Panc1 (cell line): ENCODE measurements at regions of chr11 and their contacts with region 1.

Region 1: DNA sequence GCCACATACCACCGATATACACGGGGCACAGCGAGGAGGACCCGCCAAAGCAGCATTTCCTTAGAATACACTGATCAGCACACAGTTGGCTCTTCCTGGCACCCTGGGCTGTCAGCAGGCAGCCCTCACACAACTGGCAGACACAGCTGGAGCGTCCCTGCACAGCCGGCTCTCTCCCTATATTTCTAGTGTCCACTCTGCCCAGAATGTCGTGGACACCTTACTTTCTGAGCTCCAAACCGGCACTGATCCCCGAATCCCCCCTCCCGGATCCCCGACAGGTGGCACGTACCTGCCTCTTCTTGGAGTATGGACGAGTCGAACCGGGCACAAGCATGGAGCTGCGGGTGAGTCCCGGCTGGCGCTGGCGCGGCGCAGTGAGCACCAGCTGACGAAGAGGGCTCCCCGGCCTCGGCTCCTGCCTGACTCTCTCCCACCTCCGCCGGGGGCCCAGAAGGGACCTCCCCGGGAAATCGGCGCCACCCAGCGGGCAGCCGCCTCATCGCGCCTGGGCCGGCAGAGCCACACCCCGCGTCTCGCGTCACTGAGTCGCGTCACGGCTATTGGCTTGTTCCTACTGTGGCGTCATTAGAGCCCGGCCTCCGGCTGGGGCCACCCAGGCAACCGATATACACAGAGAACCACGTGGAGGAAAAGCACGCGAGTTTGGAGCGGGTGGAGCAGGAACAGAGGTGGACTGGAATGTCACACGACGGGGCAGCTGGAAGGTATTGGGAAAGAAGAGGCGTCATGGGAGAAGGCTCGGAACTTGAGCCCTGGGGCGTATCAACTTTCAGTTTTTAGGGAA is at the start of gene USP2:
- DNase-seq: peak; percentile 78
- ATAC-seq: peak; percentile 99
- H3K4me3 ChIP-seq: peak within 1 kb of the TSS; percentile 56 to 86
- H3K27ac ChIP-seq: peak within 1 kb of the TSS; percentile 57
- H3K4me1 ChIP-seq: peaks cover 7% of the 10 kb centered on the region
- H3K27me3 ChIP-seq: no peaks in the 10 kb centered on the region
- CTCF ChIP-seq: peak; percentile 99
- total RNA-seq, gene USP2: 3.1 TPM

Region 2: GRCh38 chr11:118435893-118436624 is 945.3 kb before region 1 on chr11 and contains the start of gene KMT2A:
- CTCF ChIA-PET with region 1: no interaction called
- POLR2A ChIA-PET with region 1: no interaction called
- in situ Hi-C with region 1: no loop called
- intact Hi-C with region 1: no loop called
- DNase-seq: peak; percentile 69
- ATAC-seq: peak; percentile 76
- H3K4me3 ChIP-seq: peak within 1 kb of the TSS; percentile 84 to 95
- H3K27ac ChIP-seq: peak within 1 kb of the TSS; percentile 96
- H3K4me1 ChIP-seq: peaks cover 37% of the 10 kb centered on the region
- H3K27me3 ChIP-seq: no peaks in the 10 kb centered on the region
- CTCF ChIP-seq: no peak
- total RNA-seq, gene KMT2A: 139 TPM

Region 3: GRCh38 chr11:119339589-119340343 is 41.6 kb before region 1 on chr11:
- CTCF ChIA-PET with region 1: interaction called, 10 read pairs
- POLR2A ChIA-PET with region 1: no interaction called
- in situ Hi-C with region 1: no loop called
- intact Hi-C with region 1: no loop called
- DNase-seq: no peak
- ATAC-seq: peak; percentile 62
- H3K4me3 ChIP-seq: peak overlapping the region; percentile 36 to 48
- H3K27ac ChIP-seq: peak overlapping the region; percentile 24; the same call in 1 of the 2 replicates
- H3K4me1 ChIP-seq: peaks cover 39% of the 10 kb centered on the region
- H3K27me3 ChIP-seq: no peaks in the 10 kb centered on the region
- CTCF ChIP-seq: peak; percentile 100

Region 4: DNA sequence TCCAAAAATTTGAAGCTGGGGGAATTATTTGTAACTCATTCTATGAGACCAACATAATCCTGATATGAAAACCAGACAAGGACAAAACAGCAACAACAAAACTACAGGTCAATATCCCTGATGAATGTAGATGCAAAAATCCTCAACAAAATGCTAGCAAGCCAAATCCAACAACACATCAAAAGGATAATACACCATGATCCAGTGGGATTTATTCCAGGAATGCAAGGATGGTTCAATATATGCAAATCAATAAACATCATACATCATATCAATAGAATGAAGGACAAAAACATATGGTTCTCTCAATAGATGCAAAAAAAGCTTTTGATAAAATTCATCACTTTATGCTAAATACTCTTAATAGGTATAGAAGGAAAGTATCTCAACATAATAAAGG is 19.5 kb after region 1 on chr11:
- CTCF ChIA-PET with region 1: no interaction called
- POLR2A ChIA-PET with region 1: no interaction called
- in situ Hi-C with region 1: no loop called
- intact Hi-C with region 1: no loop called
- DNase-seq: no peak
- ATAC-seq: no peak
- H3K4me3 ChIP-seq: no peak overlapping the region
- H3K27ac ChIP-seq: no peak overlapping the region
- H3K4me1 ChIP-seq: no peaks in the 10 kb centered on the region; the same call in 1 of the 2 replicates
- H3K27me3 ChIP-seq: no peaks in the 10 kb centered on the region
- CTCF ChIP-seq: no peak

Region 5: GRCh38 chr11:119474682-119475596 is 93.6 kb after region 1 on chr11:
- CTCF ChIA-PET with region 1: interaction called, 7 read pairs
- POLR2A ChIA-PET with region 1: interaction called, 3 read pairs
- in situ Hi-C with region 1: no loop called
- intact Hi-C with region 1: loop called (anchors 5 kb)
- DNase-seq: peak; percentile 58
- ATAC-seq: peak; percentile 85
- H3K4me3 ChIP-seq: no peak overlapping the region
- H3K27ac ChIP-seq: no peak overlapping the region
- H3K4me1 ChIP-seq: no peaks in the 10 kb centered on the region
- H3K27me3 ChIP-seq: no peaks in the 10 kb centered on the region
- CTCF ChIP-seq: peak; percentile 98